ENCODE measurements at regions of chr1 and their contacts with region 1.

Region 1: DNA sequence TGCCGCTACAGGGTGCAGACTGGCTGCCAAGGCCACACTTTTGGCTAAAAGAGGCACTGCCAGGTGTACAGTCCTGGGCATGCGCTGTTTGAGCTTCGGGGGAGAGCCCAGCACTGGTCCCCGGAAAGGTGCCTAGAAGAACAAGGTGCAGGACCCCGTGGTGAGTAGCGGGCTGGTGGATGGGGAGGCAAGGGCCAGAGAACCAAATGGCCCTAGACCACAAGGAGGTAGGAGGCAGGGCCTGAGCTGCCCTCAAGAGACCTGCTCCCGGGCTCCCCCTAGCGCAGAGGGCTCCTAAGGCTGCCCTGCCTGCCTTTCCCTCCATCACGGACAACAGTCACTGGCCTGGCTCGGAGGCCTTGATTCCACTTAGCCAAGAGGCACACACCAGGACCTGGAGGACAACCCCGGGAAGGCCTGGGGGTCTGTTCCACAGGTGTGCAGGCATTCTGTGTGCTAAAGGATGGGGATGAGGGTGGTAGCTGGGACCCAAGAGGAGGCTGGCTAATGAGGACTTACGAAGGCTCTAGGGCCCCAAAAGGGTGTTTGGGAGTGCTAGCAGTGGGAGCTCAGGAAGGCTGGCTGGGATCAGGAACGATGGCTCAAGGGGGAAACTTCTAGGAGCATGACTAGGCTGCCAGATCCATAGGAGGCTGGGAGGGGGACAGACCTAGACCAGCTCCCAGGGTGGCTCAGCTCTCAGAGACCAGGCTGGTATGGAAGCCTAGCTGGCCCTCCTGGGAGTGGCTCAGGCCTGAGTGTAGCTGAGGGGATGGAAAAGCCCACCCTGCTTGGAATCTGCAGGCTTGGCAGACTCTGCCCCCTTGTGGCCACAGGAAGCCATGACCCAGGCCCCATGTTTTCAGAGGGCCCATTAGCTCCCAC is 742 bp downstream of the ARTN start:
- DNase-seq: peak; percentile 53
- ATAC-seq: peak; percentile 48
- H3K4me3 ChIP-seq: no peak overlapping the region
- H3K27ac ChIP-seq: no peak overlapping the region
- H3K4me1 ChIP-seq: peaks cover 10% of the 10 kb centered on the region
- H3K27me3 ChIP-seq: no peaks in the 10 kb centered on the region; the same call in 1 of the 2 replicates
- CTCF ChIP-seq: peak; percentile 84
- POLR2A ChIP-seq: no peak
- RAD21 ChIP-seq: peak; percentile 87

Region 2: GRCh38 chr1:43706598-43707495 is 227.5 kb before region 1 on chr1:
- CTCF ChIA-PET with region 1: interaction called, 6 read pairs
- POLR2A ChIA-PET with region 1: no interaction called
- dilution Hi-C with region 1: no loop called
- in situ Hi-C with region 1: no loop called
- intact Hi-C with region 1: loop called (anchors 1 kb)
- DNase-seq: peak; percentile 90
- ATAC-seq: peak; percentile 89
- H3K4me3 ChIP-seq: peak overlapping the region; percentile 84
- H3K27ac ChIP-seq: peak overlapping the region; percentile 63
- H3K4me1 ChIP-seq: peaks cover 11% of the 10 kb centered on the region
- H3K27me3 ChIP-seq: no peaks in the 10 kb centered on the region
- CTCF ChIP-seq: no peak
- POLR2A ChIP-seq: peak; percentile 62; the same call in 1 of the 2 replicates
- RAD21 ChIP-seq: no peak

Region 3: GRCh38 chr1:43763497-43763973 is 170.8 kb before region 1 on chr1:
- CTCF ChIA-PET with region 1: interaction called, 149 read pairs
- POLR2A ChIA-PET with region 1: no interaction called
- dilution Hi-C with region 1: no loop called
- in situ Hi-C with region 1: no loop called
- intact Hi-C with region 1: loop called (anchors 1 kb)
- DNase-seq: peak; percentile 93
- ATAC-seq: peak; percentile 98
- H3K4me3 ChIP-seq: no peak overlapping the region
- H3K27ac ChIP-seq: no peak overlapping the region
- H3K4me1 ChIP-seq: peaks cover 7% of the 10 kb centered on the region
- H3K27me3 ChIP-seq: no peaks in the 10 kb centered on the region
- CTCF ChIP-seq: peak; percentile 97
- POLR2A ChIP-seq: 0 out of 2 replicates have a peak, but pooled peaks have one; percentile 46
- RAD21 ChIP-seq: peak; percentile 100

Region 4: DNA sequence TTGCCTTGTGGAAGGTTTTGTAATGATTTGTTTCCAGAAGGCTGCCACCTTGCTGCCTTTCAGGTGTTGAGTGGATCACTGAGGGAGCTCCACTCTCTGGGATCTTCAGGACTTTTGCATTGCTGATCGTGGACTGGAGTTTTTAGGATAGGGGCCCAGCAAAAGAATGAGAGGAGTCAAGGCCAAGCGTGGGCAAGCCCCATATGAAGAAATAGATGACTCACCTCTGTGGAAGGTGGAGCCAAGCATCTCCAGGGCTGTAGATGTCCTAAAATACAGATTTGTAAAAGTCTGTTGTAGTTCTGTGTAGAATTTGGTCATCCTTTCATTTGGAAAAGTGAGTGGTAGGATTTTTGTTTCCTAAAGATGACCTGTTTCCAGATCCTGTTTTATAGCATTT is 160.0 kb before region 1 on chr1:
- CTCF ChIA-PET with region 1: interaction called, 149 read pairs
- POLR2A ChIA-PET with region 1: no interaction called
- dilution Hi-C with region 1: no loop called
- in situ Hi-C with region 1: loop called (anchors 5 kb)
- intact Hi-C with region 1: no loop called
- DNase-seq: peak; percentile 84
- ATAC-seq: peak; percentile 89
- H3K4me3 ChIP-seq: no peak overlapping the region
- H3K27ac ChIP-seq: peak overlapping the region; percentile 6; the same call in 1 of the 2 replicates
- H3K4me1 ChIP-seq: peaks cover 3% of the 10 kb centered on the region; the same call in 1 of the 2 replicates
- H3K27me3 ChIP-seq: no peaks in the 10 kb centered on the region
- CTCF ChIP-seq: no peak
- POLR2A ChIP-seq: no peak
- RAD21 ChIP-seq: no peak

Region 5: DNA sequence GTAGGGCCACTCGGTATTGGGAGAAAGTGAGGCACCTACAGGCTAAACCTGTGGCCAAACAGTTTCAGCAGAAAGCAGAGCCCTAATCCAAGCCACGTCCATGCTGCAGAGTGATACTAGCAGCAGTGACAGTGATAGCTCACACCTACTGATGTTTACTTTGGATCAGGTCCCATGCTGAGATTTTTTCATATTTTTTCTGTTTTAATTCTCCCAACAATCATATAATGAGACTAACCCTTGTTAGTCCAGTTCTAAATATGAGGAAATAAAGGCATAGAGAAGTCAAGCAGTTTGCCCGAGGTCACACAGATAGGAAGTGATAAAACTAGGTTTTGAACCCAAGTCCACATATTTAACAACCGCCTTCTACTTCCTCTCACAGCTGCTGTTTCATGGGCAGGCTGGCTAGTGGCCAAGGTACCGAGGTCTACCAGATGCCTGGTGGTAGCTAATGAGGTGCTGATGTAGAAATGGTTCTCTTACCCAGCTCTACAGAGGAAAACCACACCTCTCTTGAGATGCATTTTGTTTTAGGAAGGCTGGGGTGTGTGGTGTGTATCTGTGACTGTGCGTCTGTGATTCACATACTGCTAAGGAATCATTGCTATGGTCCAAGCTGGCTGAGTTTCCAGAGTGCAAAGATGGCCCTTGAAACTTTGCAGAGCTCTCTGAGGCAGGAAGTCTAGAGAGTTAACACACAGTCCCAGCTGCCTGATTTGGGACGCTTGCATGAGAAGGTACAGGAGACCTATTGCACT is 81.0 kb before region 1 on chr1:
- CTCF ChIA-PET with region 1: no interaction called
- POLR2A ChIA-PET with region 1: no interaction called
- dilution Hi-C with region 1: no loop called
- in situ Hi-C with region 1: no loop called
- intact Hi-C with region 1: loop called (anchors 5 kb)
- DNase-seq: peak; percentile 79
- ATAC-seq: peak; percentile 46
- H3K4me3 ChIP-seq: no peak overlapping the region
- H3K27ac ChIP-seq: no peak overlapping the region
- H3K4me1 ChIP-seq: peaks cover 8% of the 10 kb centered on the region
- H3K27me3 ChIP-seq: no peaks in the 10 kb centered on the region
- CTCF ChIP-seq: no peak
- POLR2A ChIP-seq: no peak
- RAD21 ChIP-seq: no peak

Region 6: GRCh38 chr1:43946236-43947060 is 12.1 kb after region 1 on chr1 and contains the start of gene IPO13:
- CTCF ChIA-PET with region 1: interaction called, 21 read pairs
- POLR2A ChIA-PET with region 1: no interaction called
- dilution Hi-C with region 1: no loop called
- in situ Hi-C with region 1: no loop called
- intact Hi-C with region 1: no loop called
- DNase-seq: peak; percentile 94
- ATAC-seq: peak; percentile 97
- H3K4me3 ChIP-seq: peak within 1 kb of the TSS; percentile 67
- H3K27ac ChIP-seq: peak within 1 kb of the TSS; percentile 97
- H3K4me1 ChIP-seq: peaks cover 15% of the 10 kb centered on the region
- H3K27me3 ChIP-seq: no peaks in the 10 kb centered on the region
- CTCF ChIP-seq: peak; percentile 66
- POLR2A ChIP-seq: peak; percentile 72
- RAD21 ChIP-seq: peak; percentile 59
- total RNA-seq, gene IPO13: 14.2 and 15.2 TPM in 2 replicates

Measured in IMR-90 (cell line).